PC-3 (cell line): ENCODE measurements at regions of chr13 and their contacts with region 1.

Region 1: DNA sequence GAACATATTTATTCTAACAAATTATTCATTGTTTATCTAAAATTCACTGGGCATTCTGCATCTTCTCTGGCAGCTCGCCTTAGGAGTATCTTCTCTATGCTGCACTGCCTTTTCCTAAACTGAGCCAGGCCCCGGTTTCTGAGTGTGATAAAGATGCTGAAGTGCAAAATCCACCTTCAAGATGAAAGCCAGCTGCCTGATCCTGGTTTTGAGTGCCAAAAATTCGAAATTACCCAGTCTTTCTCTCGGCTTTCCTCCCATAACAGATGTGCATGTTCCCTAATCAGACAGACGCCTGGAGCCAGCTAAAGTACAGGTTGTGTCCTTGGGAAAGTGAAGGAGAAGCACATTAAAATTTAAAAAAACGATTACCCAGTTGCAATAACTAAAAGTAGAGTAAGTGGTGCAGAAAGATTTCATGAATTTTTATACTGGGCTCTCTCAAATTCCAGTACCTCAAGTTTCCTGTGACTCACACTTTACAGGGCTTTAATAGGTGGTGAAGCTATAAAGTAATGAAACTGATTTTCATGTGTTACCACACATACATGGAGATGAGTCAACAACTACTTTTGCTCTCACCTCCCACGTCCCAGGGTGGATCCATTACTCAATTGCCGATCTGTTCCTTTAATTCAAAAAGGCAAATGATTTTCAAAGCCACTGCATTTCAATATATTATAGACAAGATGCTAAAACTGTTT is 65.0 kb upstream of the GTF2F2 start:
- DNase-seq: peak; percentile 93
- ATAC-seq: peak; percentile 89
- H3K4me3 ChIP-seq: peak overlapping the region; percentile 56; the same call in 1 of the 2 replicates
- H3K27ac ChIP-seq: peak overlapping the region; percentile 99
- H3K4me1 ChIP-seq: peaks cover 27% of the 10 kb centered on the region
- H3K27me3 ChIP-seq: no peaks in the 10 kb centered on the region
- CTCF ChIP-seq: no peak

Region 2: DNA sequence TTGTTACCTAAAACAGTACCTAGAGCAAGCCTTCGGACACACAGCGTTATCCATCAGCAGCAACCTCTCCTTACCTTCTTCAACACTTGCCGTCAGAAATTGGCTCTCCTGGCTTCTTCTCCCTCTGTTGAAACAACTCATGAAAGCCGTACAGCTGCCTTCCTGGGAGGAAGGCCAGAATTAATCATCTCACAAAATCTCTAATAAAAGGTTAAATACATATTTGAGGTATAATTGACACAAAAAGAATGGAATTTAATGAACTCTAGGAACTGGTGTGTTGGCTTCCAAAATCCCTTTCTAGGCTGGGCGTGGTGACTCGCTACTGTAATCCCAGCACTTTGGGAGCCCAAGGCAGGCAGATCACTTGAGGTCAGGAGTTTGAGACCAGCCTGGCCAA is 27.6 kb after region 1 on chr13:
- CTCF ChIA-PET with region 1: no interaction called
- POLR2A ChIA-PET with region 1: no interaction called
- intact Hi-C with region 1: loop called (anchors 1 kb)
- DNase-seq: peak; percentile 92
- ATAC-seq: peak; percentile 89
- H3K4me3 ChIP-seq: peak overlapping the region; percentile 17; the same call in 1 of the 2 replicates
- H3K27ac ChIP-seq: peak overlapping the region; percentile 55
- H3K4me1 ChIP-seq: peaks cover 32% of the 10 kb centered on the region
- H3K27me3 ChIP-seq: no peaks in the 10 kb centered on the region
- CTCF ChIP-seq: no peak

Region 3: GRCh38 chr13:45119991-45120864 is 64.9 kb after region 1 on chr13 and contains the start of gene GTF2F2:
- CTCF ChIA-PET with region 1: no interaction called
- POLR2A ChIA-PET with region 1: no interaction called
- intact Hi-C with region 1: loop called (anchors 2 kb)
- DNase-seq: peak; percentile 84
- ATAC-seq: peak; percentile 86
- H3K4me3 ChIP-seq: peak within 1 kb of the TSS; percentile 99
- H3K27ac ChIP-seq: peak within 1 kb of the TSS; percentile 83
- H3K4me1 ChIP-seq: peaks cover 13% of the 10 kb centered on the region
- H3K27me3 ChIP-seq: no peaks in the 10 kb centered on the region
- CTCF ChIP-seq: no peak
- total RNA-seq, gene GTF2F2: 24.8 and 28.3 TPM in 2 replicates

Region 4: DNA sequence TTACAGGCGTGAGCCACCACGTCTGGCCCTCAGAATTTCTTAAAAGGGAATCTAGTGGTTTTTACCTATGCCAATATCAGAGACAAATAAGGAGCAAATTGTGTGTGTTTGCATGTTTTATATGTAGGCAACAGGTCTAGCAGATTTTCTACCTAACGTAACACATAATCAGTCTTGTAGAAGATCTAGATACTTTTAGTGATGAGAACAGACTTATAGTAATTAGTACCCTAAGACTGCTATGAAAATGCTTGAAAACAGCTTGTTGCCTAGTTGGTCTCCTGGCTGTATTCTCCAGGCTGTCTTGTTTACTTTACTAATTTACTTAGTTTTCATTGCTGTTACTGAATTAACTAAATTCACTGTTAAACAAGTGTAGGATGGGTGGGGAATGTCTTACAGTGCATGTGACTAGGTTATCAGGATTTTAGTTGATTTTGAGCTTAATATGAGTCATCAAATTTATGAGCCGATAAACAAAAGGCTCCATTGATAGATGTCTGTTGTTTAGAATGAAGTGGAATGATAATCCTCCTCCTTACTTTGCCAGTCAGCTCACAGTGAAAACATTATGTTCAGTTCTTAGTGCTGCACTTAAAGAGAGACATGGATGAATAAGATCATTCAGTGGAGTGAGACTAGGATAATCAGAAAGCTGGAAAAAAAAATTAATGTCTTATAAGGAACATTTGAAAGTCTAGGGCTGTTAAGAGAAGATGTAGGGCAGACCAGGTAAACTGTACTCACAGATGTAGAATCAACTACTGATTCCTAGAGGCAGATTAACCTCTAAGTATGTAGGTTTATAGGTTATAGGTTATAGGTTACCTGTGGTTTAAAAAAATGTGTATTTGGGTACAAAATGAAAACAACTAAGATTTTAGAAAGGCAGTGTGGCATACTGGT is 87.3 kb after region 1 on chr13:
- CTCF ChIA-PET with region 1: no interaction called
- POLR2A ChIA-PET with region 1: no interaction called
- intact Hi-C with region 1: loop called (anchors 5 kb)
- DNase-seq: peak; percentile 67
- ATAC-seq: peak; percentile 85
- H3K4me3 ChIP-seq: 0 out of 2 replicates have a peak overlapping the region, but pooled peaks have one; percentile 14
- H3K27ac ChIP-seq: peak overlapping the region; percentile 57
- H3K4me1 ChIP-seq: peaks cover 21% of the 10 kb centered on the region
- H3K27me3 ChIP-seq: no peaks in the 10 kb centered on the region
- CTCF ChIP-seq: no peak

Region 5: DNA sequence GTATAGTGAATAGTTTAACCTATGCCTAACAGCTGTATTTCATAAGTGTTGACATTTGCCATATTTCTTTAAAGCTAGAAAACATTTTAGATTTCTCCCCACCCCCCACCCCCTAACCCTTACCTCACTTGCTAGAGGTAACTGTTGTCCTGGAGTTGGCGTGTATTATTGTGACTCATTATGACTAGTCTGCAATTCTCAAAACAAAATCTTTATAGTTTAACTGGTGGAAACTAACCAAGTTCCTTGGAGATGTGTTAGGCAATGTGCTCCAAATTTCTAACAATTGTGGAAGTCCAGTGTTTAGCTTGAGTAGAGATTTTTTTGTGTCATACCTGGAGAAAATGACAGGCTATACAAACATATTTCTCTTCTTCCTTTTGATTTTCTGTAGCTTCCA is 107.5 kb after region 1 on chr13:
- CTCF ChIA-PET with region 1: no interaction called
- POLR2A ChIA-PET with region 1: no interaction called
- intact Hi-C with region 1: loop called (anchors 1 kb)
- DNase-seq: peak; percentile 92
- ATAC-seq: peak; percentile 86
- H3K4me3 ChIP-seq: peak overlapping the region; percentile 32; the same call in 1 of the 2 replicates
- H3K27ac ChIP-seq: peak overlapping the region; percentile 86
- H3K4me1 ChIP-seq: peaks cover 35% of the 10 kb centered on the region
- H3K27me3 ChIP-seq: no peaks in the 10 kb centered on the region
- CTCF ChIP-seq: no peak

Region 6: DNA sequence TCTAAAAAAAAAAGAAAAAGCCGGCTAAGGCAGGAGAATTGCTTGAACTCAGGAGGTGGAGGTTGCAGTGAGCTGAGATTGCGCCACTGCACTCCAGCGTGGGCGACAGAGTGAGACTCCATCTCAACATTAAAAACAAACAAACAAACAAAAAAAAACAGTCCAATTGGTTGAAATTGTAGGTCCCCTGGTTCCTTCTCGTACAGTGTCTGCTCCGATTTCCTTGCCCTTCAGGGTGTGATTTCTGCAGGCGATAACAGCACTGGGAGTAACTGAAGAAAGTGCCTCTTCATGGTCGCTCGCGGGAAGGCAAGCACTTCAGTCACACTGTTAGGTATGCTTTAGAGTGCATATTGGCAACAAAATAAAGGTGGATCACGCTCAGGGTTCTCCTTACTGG is 245.9 kb after region 1 on chr13:
- CTCF ChIA-PET with region 1: no interaction called
- POLR2A ChIA-PET with region 1: interaction called, 42 read pairs
- intact Hi-C with region 1: no loop called
- DNase-seq: no peak
- ATAC-seq: peak; percentile 30; the same call in 1 of the 2 replicates
- H3K4me3 ChIP-seq: no peak overlapping the region
- H3K27ac ChIP-seq: no peak overlapping the region
- H3K4me1 ChIP-seq: no peaks in the 10 kb centered on the region
- H3K27me3 ChIP-seq: no peaks in the 10 kb centered on the region
- CTCF ChIP-seq: no peak